Esophagus muscularis mucosa (tissue), 4 donors: ENCODE measurements at regions of chr4 and their contacts with region 1.

Region 1: GRCh38 chr4:151760712-151761527 is at the start of gene GATB:
- DNase-seq: peak; percentile 97
- H3K4me3 ChIP-seq: peak within 1 kb of the TSS; percentile 68 to 80 (median 70)
- H3K27ac ChIP-seq: peak within 1 kb of the TSS; percentile 50 to 74 (median 68)
- H3K4me1 ChIP-seq: peaks cover 6 to 15% (median 8%) of the 10 kb centered on the region in 4 donors
- H3K27me3 ChIP-seq: no peaks in the 10 kb centered on the region
- CTCF ChIP-seq: peak; percentile 30 to 49 (median 49)
- EP300 ChIP-seq: no peak
- POLR2A ChIP-seq: no peak
- total RNA-seq, gene GATB: 12.4 to 19.9 (median 16.4) TPM

Region 2: DNA sequence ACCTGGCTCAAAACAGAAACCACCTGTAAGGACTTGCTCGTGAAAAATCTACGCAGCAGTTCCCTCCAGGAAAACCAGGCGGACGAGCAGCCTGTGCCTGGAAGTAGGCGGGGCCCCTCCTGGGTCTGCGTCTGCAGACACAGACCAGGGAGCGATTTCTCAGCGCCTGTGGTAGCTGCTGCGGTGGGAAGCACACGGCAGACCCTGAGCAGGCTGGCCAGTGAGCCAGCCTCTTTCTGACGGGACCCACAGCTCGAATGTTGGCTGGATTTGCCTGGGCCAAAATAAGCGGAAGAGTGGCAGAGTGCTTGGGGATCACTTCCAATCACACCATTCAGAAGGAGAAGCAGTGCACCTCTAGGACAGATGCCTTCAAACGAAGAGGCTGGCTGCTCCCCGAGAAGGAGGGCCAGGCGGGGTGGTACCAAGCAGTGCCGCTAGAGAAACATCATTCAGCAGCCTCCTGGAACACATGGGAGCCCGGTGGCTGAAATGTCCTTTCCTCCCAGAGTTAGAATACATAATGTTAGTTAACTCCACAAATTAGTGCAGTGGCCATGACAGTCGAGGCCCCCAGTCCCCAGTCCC is 86.0 kb before region 1 on chr4:
- intact Hi-C with region 1: loop called (anchors 5 kb)
- DNase-seq: no peak
- H3K4me3 ChIP-seq: peak overlapping the region; percentile 45 to 57 (median 47)
- H3K27ac ChIP-seq: peak overlapping the region; percentile 38 to 68 (median 53)
- H3K4me1 ChIP-seq: peaks cover 14 to 25% (median 18%) of the 10 kb centered on the region in 4 donors
- H3K27me3 ChIP-seq: no peaks in the 10 kb centered on the region
- CTCF ChIP-seq: peak in 1 of 3 experiments; percentile 41
- EP300 ChIP-seq: no peak
- POLR2A ChIP-seq: no peak

Region 3: DNA sequence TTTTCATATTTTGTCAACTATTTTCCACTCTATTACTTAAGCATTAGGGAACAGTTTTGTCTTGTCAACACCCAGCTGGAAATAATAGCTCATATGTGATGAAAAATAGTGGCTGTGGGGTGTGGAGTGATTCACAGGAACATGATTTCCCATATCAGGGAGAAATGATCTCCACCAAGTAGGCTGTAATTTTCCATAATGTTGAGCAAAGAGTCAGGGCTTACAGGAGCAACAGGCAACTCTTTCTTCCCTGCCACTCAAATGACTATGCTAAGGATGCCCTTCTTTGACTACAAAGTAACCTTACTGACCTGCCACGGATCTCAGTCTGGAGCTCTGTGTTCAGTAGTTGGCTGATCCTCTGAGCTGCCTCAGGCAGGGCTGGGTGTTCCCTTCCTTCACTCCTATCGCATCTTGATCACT is 89.9 kb after region 1 on chr4:
- intact Hi-C with region 1: no loop called
- DNase-seq: no peak
- H3K4me3 ChIP-seq: no peak overlapping the region
- H3K27ac ChIP-seq: peak overlapping the region in 1 of 4 donors; percentile 37
- H3K4me1 ChIP-seq: peaks cover 0 to 8% (median 4%) of the 10 kb centered on the region in 4 donors
- H3K27me3 ChIP-seq: no peaks in the 10 kb centered on the region
- CTCF ChIP-seq: no peak
- EP300 ChIP-seq: no peak
- POLR2A ChIP-seq: no peak

Region 4: GRCh38 chr4:152352622-152353116 is 591.7 kb after region 1 on chr4:
- intact Hi-C with region 1: loop called (anchors 10 kb)
- DNase-seq: no peak
- H3K4me3 ChIP-seq: peak overlapping the region; percentile 51 to 63 (median 54)
- H3K27ac ChIP-seq: peak overlapping the region; percentile 70 to 78 (median 74)
- H3K4me1 ChIP-seq: peaks cover 22 to 52% (median 33%) of the 10 kb centered on the region in 4 donors
- H3K27me3 ChIP-seq: no peaks in the 10 kb centered on the region
- CTCF ChIP-seq: no peak
- EP300 ChIP-seq: no peak
- POLR2A ChIP-seq: no peak

Region 5: GRCh38 chr4:152385551-152385950 is 624.6 kb after region 1 on chr4:
- intact Hi-C with region 1: loop called (anchors 10 kb)
- DNase-seq: no peak
- H3K4me3 ChIP-seq: no peak overlapping the region
- H3K27ac ChIP-seq: no peak overlapping the region
- H3K4me1 ChIP-seq: peaks cover 5 to 18% (median 16%) of the 10 kb centered on the region in 4 donors
- H3K27me3 ChIP-seq: no peaks in the 10 kb centered on the region
- CTCF ChIP-seq: peak; percentile 54 to 75 (median 58)
- EP300 ChIP-seq: no peak
- POLR2A ChIP-seq: no peak